Left cardiac atrium (tissue), 4 donors: ENCODE measurements at regions of chr12 and their contacts with region 1.

Region 1: DNA sequence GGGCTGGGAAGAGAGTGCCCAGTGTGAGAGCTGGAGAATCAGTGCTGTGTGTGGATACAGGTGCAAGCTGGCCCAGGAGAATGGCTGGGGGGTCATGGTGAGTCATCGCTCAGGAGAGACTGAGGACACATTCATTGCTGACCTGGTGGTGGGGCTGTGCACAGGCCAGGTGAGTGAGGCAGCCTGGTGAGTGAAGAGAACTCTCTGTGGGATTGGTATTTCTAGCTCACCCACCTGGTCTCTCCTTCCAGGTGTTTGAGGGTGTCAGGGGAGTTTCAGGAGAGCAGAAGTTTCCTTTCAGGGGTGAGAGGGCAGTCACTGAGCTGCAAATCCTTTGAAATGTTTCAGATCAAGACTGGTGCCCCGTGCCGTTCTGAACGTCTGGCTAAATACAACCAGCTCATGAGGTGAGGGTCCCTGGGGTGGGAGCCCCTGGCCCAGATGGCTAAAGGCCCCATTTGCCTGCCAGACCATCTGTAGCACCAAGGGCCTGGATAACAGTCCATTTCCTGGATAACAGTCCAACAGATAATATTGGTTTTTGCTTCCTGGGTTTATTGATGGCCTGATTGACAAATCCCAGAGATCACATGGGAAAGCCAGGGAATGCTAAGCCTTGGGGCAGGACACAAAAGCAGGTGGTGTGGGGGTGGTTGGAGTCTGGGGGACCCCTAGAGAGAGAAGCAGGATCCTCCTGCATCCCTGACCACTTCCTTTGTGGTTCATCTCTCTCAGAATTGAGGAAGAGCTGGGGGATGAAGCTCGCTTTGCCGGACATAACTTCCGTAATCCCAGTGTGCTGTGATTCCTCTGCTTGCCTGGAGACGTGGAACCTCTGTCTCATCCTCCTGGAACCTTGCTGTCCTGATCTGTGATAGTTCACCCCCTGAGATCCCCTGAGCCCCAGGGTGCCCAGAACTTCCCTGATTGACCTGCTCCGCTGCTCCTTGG is 5.5 kb upstream of the ATN1 start:
- DNase-seq: no peak
- ATAC-seq: no peak

Region 2: GRCh38 chr12:6684609-6685008 is 237.7 kb before region 1 on chr12:
- intact Hi-C with region 1: no loop called
- DNase-seq: no peak
- ATAC-seq: no peak

Region 3: GRCh38 chr12:6965026-6965661 is 42.9 kb after region 1 on chr12:
- intact Hi-C with region 1: loop called in 1 of 2 experiments (anchors 2 kb)
- DNase-seq: peak; percentile 91
- ATAC-seq: peak; percentile 69 to 76